GM12878 (cell line): ENCODE measurements at regions of chr9 and their contacts with region 1.

Region 1: GRCh38 chr9:75200892-75201470 is 112.7 kb downstream of the OSTF1 start:
- DNase-seq: no peak
- ATAC-seq: peak; percentile 46; the same call in 1 of the 3 replicates
- H3K4me3 ChIP-seq: no peak overlapping the region
- H3K27ac ChIP-seq: no peak overlapping the region
- H3K4me1 ChIP-seq: no peaks in the 10 kb centered on the region
- H3K27me3 ChIP-seq: no peaks in the 10 kb centered on the region
- CTCF ChIP-seq: peak; percentile 30 to 57 (median 49); a peak in 4 of 6 replicates
- EP300 ChIP-seq: no peak
- POLR2A ChIP-seq: no peak
- RAD21 ChIP-seq: peak; percentile 72

Region 2: DNA sequence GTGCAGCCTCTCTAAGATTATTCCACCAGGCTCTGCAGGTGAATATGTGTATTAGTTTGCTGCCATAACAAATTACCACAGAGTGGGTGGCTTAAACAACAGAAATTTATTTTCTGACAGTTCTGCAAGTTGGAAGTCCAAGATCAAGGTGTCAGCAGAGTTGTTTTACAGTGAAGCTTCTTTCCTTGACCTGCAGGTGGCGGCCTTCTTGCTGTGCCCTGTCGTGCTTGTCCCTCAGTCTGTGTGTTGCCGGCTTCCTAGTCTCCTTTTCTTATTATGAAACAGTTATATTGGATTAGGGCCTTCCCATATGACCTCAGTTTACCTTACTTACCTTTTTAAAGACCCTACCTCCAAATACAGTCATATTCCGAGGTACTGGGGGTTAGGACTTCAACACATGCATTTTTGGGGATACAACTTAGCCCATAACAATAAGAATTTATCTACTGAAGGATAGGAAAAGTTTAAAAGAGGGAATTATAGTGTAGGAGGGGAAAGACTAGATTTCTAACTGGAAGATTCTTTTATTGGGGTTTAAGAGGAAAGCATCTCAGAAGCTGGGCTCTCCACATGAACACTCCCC is 15.3 kb before region 1 on chr9:
- CTCF ChIA-PET with region 1: interaction called, 14 read pairs
- POLR2A ChIA-PET with region 1: no interaction called
- RAD21 ChIA-PET with region 1: no interaction called
- SMC1A ChIA-PET with region 1: no interaction called
- in situ Hi-C with region 1: no loop called
- intact Hi-C with region 1: no loop called
- DNase-seq: no peak
- ATAC-seq: peak; percentile 94
- H3K4me3 ChIP-seq: no peak overlapping the region
- H3K27ac ChIP-seq: no peak overlapping the region
- H3K4me1 ChIP-seq: no peaks in the 10 kb centered on the region
- H3K27me3 ChIP-seq: no peaks in the 10 kb centered on the region; a peak in 1 of 4 replicates
- CTCF ChIP-seq: peak; percentile 57 to 90 (median 76)
- EP300 ChIP-seq: no peak
- POLR2A ChIP-seq: no peak
- RAD21 ChIP-seq: no peak

Region 3: GRCh38 chr9:75238311-75238978 is 37.5 kb after region 1 on chr9:
- CTCF ChIA-PET with region 1: interaction called, 6 read pairs
- POLR2A ChIA-PET with region 1: no interaction called
- RAD21 ChIA-PET with region 1: interaction called, 4 read pairs
- SMC1A ChIA-PET with region 1: interaction called, 5 read pairs
- in situ Hi-C with region 1: no loop called
- intact Hi-C with region 1: loop called (anchors 1 kb)
- DNase-seq: peak; percentile 3
- ATAC-seq: peak; percentile 99
- H3K4me3 ChIP-seq: no peak overlapping the region
- H3K27ac ChIP-seq: no peak overlapping the region
- H3K4me1 ChIP-seq: no peaks in the 10 kb centered on the region
- H3K27me3 ChIP-seq: no peaks in the 10 kb centered on the region
- CTCF ChIP-seq: peak; percentile 54 to 66 (median 62)
- EP300 ChIP-seq: no peak
- POLR2A ChIP-seq: no peak
- RAD21 ChIP-seq: peak; percentile 62

Region 4: DNA sequence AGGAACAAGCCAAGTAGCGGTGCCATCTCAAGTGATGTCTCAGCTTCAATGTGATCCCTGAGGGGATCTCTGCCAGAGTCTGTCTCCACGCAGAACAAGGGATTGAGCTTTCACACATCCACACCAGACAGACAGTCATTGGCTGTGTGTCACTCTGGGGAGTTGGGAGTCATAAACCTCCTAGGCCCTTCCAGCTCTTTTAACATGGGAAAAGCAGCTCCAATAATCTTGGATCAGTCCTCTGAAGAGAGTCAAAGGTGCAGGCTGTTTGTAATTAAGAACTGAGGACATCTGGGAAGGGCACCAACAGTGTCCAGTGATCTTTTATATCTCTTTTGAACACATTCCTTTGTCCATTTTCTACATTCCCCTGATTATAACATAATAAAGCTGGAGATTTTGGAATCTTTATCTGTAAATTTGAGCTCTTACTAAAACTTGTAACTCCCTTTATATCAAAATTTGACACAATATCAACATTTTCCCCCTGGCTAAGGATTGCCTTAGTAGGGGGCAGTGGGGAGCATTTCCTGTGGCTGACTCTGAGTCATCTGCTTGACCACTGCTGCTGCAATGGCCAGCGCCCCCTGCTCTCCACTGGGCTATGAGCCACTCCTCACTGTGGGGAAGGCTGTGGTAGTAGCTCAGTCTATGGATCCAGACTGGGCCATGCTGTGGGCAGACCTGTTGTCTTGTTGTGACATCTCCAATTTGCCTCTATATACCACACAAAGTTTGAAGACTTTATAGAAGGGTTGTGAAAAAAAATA is 171.7 kb after region 1 on chr9:
- CTCF ChIA-PET with region 1: no interaction called
- POLR2A ChIA-PET with region 1: no interaction called
- RAD21 ChIA-PET with region 1: no interaction called
- SMC1A ChIA-PET with region 1: no interaction called
- in situ Hi-C with region 1: no loop called
- intact Hi-C with region 1: no loop called
- DNase-seq: no peak
- ATAC-seq: no peak
- H3K4me3 ChIP-seq: no peak overlapping the region
- H3K27ac ChIP-seq: no peak overlapping the region
- H3K4me1 ChIP-seq: no peaks in the 10 kb centered on the region
- H3K27me3 ChIP-seq: no peaks in the 10 kb centered on the region
- CTCF ChIP-seq: no peak
- EP300 ChIP-seq: no peak
- POLR2A ChIP-seq: no peak
- RAD21 ChIP-seq: no peak

Region 5: DNA sequence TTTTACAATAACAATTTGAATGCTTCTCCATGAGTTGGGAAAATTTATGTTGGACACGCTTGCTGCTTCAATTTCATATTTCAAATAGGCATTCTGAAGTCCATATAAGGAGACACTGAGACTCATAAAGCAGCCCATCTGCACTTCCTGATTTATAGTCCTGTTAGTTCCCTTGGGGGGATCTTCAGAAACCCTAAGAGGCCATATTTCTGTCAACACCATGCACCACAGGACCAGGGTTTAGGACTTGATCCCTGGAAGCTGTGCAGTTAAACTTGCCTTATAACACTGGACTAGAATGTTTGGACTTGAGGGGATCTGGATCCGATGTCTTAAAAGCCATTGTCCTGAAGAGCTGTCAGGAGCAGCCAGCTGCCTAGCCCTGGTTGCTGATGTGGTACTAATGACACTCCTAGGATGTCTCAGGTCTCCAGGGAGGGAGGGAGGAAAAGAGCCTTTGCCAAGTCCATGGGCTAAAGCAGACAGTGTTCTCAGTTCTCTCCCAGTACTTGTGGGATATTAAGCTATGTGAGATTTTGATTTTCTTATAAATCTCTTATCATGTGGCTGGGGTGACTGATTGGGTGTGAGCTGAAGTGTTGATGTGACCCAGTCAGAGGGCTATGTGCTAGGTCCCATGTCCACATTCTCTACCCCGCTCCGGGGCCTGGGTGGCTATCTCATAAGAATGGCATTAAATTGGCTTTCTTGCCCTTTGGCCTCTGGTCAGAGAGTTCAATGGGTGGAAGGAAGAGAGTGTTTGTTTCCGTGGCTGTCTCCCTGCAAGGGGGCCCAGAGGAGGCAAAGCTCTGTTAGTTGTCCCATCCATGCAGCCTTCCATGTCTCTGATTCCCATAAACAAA is 287.1 kb after region 1 on chr9:
- CTCF ChIA-PET with region 1: no interaction called
- POLR2A ChIA-PET with region 1: no interaction called
- RAD21 ChIA-PET with region 1: no interaction called
- SMC1A ChIA-PET with region 1: no interaction called
- in situ Hi-C with region 1: no loop called
- intact Hi-C with region 1: loop called (anchors 10 kb)
- DNase-seq: no peak
- ATAC-seq: no peak
- H3K4me3 ChIP-seq: no peak overlapping the region
- H3K27ac ChIP-seq: no peak overlapping the region
- H3K4me1 ChIP-seq: no peaks in the 10 kb centered on the region
- H3K27me3 ChIP-seq: no peaks in the 10 kb centered on the region
- CTCF ChIP-seq: no peak
- EP300 ChIP-seq: no peak
- POLR2A ChIP-seq: no peak
- RAD21 ChIP-seq: no peak

Region 6: GRCh38 chr9:75582870-75583269 is 381.9 kb after region 1 on chr9:
- CTCF ChIA-PET with region 1: no interaction called
- POLR2A ChIA-PET with region 1: no interaction called
- RAD21 ChIA-PET with region 1: no interaction called
- SMC1A ChIA-PET with region 1: no interaction called
- in situ Hi-C with region 1: no loop called
- intact Hi-C with region 1: no loop called
- DNase-seq: no peak
- ATAC-seq: no peak
- H3K4me3 ChIP-seq: no peak overlapping the region
- H3K27ac ChIP-seq: no peak overlapping the region
- H3K4me1 ChIP-seq: no peaks in the 10 kb centered on the region
- H3K27me3 ChIP-seq: no peaks in the 10 kb centered on the region
- CTCF ChIP-seq: no peak
- EP300 ChIP-seq: no peak
- POLR2A ChIP-seq: no peak
- RAD21 ChIP-seq: no peak

Region 7: DNA sequence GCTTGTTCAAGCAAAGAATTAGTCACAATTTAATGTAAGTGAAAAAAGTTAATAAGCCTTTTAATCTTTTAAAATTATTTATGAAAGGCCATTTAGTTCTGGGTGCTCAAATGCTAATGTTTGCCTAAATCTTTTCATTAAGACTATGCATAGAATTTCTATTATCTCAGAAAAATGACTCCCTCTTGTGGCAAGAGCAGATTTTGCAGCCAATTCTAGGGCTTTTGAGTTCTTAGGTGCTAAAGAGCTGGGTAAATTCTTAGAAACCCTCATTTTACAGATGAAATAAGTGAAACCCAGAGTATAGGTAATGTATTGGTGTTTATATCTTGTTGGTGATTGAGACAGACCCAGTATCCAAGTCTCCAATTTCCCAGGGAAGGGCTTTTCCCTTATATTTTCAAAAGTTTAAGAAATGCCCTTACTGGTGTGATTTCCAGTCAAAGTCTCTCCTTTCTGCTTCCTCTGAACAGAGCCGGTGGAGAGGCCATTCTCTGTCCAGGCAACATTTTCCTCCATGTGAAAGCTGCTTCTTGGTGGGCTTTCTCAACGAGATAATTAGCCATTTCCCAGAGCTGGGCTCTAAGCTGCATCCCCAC is 665.4 kb after region 1 on chr9:
- CTCF ChIA-PET with region 1: interaction called, 4 read pairs
- POLR2A ChIA-PET with region 1: no interaction called
- RAD21 ChIA-PET with region 1: interaction called, 5 read pairs
- SMC1A ChIA-PET with region 1: interaction called, 3 read pairs
- in situ Hi-C with region 1: no loop called
- intact Hi-C with region 1: loop called (anchors 5 kb)
- DNase-seq: no peak
- ATAC-seq: peak; percentile 76
- H3K4me3 ChIP-seq: no peak overlapping the region
- H3K27ac ChIP-seq: no peak overlapping the region
- H3K4me1 ChIP-seq: no peaks in the 10 kb centered on the region
- H3K27me3 ChIP-seq: no peaks in the 10 kb centered on the region; a peak in 1 of 4 replicates
- CTCF ChIP-seq: peak; percentile 55 to 63 (median 58); a peak in 5 of 6 replicates
- EP300 ChIP-seq: no peak
- POLR2A ChIP-seq: no peak
- RAD21 ChIP-seq: peak; percentile 72

Region 8: DNA sequence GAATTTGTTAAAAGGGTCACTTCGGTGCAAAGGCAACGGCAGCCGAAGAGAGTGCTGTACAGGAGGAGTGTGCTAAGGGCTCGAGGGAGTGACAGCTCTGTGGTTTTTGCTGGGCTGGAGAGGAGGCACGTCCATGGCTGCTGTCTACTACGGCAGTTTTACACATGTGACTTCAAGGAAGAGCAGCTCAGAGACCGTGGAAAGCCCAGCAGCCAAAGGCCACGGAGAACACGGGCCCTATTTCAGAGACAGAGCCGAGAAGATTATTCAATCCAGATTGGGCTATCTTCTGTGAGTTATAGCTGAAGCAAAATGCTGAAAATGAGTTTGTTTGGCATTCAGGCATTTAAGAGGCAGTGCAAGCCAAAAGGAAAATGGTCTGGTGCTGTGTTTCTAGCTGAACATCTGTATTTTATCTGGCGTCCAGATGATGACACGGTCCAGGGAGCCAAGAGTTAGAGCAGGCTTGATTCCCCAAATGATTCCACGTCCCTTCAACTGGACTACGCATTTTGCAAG is 1096.8 kb after region 1 on chr9:
- CTCF ChIA-PET with region 1: no interaction called
- POLR2A ChIA-PET with region 1: no interaction called
- RAD21 ChIA-PET with region 1: interaction called, 3 read pairs
- SMC1A ChIA-PET with region 1: no interaction called
- in situ Hi-C with region 1: no loop called
- intact Hi-C with region 1: loop called (anchors 10 kb)
- DNase-seq: no peak
- ATAC-seq: no peak
- H3K4me3 ChIP-seq: no peak overlapping the region
- H3K27ac ChIP-seq: no peak overlapping the region
- H3K4me1 ChIP-seq: no peaks in the 10 kb centered on the region; the same call in 1 of the 2 replicates
- H3K27me3 ChIP-seq: no peaks in the 10 kb centered on the region; a peak in 1 of 4 replicates
- CTCF ChIP-seq: no peak
- EP300 ChIP-seq: no peak
- POLR2A ChIP-seq: no peak
- RAD21 ChIP-seq: no peak